ENCODE measurements at regions of chr13 and their contacts with region 1.

Region 1: DNA sequence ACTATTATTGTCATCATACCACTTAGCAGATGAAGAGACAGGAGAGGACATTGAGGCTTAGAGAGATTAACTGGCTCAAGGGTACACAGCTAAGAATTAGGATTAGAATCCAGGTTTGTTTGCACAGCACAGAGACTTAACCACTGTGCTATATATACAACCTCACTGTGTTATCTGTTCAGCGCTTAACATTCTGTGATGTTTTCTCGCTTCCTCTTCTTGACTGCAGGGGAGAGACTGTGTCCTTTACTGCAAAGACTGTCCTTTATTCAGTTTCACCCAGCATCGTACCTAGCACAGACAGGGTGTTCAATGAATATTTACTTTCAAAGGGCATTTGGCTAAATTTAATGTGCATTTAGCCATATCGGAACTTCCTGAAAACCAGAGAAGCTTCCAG is 54.9 kb upstream of the PCDH8 start:
- DNase-seq: no peak
- H3K4me3 ChIP-seq: no peak overlapping the region
- H3K27ac ChIP-seq: no peak overlapping the region
- H3K4me1 ChIP-seq: no peaks in the 10 kb centered on the region
- H3K27me3 ChIP-seq: no peaks in the 10 kb centered on the region
- CTCF ChIP-seq: no peak

Region 2: GRCh38 chr13:52884429-52885010 is 18.8 kb before region 1 on chr13:
- CTCF ChIA-PET with region 1: no interaction called
- POLR2A ChIA-PET with region 1: no interaction called
- intact Hi-C with region 1: loop called (anchors 2 kb)
- DNase-seq: no peak
- H3K4me3 ChIP-seq: no peak overlapping the region
- H3K27ac ChIP-seq: no peak overlapping the region
- H3K4me1 ChIP-seq: no peaks in the 10 kb centered on the region
- H3K27me3 ChIP-seq: peaks cover 2% of the 10 kb centered on the region
- CTCF ChIP-seq: no peak

Measured in A673 (cell line).